ENCODE measurements at regions of chr12 and their contacts with region 1.

Region 1: DNA sequence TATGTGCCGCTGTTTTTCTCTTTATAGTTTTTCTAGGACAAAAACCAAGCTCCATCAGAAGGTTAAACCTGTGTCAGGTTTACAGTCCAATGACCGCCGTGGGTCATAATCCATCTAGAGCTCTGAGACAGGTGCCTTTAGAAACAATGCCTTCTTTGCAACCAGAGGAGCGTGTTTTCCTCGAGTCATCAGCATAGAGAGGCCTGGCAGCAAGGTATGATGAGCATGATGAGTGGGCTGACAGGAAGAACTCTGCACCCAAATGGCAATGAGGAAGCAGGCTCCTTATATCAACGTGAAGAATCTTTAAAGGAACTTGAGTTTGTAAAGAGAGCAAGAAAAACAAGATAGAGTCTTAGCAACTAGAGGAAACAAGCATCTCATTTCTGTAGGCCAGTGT is 60.5 kb upstream of the NUDT4 start:
- DNase-seq: no peak
- H3K4me3 ChIP-seq: no peak overlapping the region
- H3K27ac ChIP-seq: no peak overlapping the region
- H3K4me1 ChIP-seq: peaks cover 0 to 13% (median 9%) of the 10 kb centered on the region in 4 donors
- H3K27me3 ChIP-seq: no peaks in the 10 kb centered on the region
- CTCF ChIP-seq: no peak
- EP300 ChIP-seq: no peak
- POLR2A ChIP-seq: no peak

Region 2: DNA sequence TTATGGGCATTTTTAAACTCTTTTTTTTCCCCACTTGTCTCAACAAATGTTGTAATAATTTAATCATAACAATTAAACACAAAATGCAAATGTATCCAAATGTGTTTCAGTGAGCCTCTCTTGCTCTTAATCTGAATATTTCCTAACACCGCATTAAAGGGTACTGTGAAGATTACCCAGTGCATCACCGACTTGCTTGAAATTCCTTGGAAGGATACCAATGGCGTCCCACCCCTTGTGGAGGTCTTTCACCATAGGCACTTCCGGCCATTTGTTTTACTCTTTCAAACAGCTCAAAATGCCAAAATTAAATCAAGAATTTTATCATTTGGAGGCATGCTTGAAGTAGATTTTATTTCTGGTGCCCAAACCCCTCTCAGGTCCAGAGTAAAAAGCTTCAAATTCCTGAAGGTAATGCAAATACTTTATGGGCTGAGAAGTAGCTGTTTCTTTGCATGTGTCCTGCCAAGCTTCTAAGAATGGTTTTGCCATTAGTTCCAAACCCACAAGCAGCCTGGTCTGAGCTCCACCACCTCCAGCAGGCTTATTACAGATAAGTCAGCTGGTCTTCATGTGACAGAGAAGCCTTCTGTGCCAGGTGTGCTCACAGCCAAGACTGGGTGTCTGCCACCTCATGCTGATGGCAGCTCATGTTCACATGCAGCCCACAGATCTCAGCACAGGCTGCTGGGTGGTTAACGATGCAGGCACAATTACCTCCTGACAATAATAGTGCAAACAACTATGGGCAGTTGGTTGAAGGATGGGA is 44.1 kb after region 1 on chr12:
- intact Hi-C with region 1: loop called (anchors 5 kb)
- DNase-seq: no peak
- H3K4me3 ChIP-seq: no peak overlapping the region
- H3K27ac ChIP-seq: peak overlapping the region in 1 of 4 donors; percentile 33
- H3K4me1 ChIP-seq: peaks cover 0 to 36% (median 25%) of the 10 kb centered on the region in 4 donors
- H3K27me3 ChIP-seq: no peaks in the 10 kb centered on the region
- CTCF ChIP-seq: no peak
- EP300 ChIP-seq: no peak
- POLR2A ChIP-seq: no peak

Measured in esophagus muscularis mucosa (tissue), 4 donors.